Calu3 (cell line): ENCODE measurements at regions of chr2 and their contacts with region 1.

Region 1: DNA sequence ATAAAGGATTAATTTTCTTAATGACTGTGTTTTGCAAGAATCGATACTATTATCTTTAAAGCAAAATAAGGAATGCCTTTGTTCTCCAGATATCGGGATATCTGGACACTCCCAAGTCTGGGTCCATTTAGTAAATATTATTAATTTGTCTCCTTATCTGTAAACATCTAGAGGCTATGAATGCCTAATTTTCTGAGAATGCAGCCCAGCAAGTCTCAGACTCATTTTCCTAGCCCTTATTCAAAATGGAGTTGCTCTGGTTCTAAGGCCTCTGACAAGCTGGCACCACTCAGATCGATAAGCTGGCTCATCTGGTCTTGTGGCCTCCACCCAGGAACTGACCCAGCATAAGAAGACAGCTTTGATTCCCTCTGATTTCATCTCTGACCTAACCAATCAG is 538.8 kb upstream of the SLC8A1 start:
- DNase-seq: peak; percentile 18
- H3K4me3 Mint-ChIP-seq: no peak overlapping the region
- H3K27ac Mint-ChIP-seq: no peak overlapping the region
- H3K4me1 Mint-ChIP-seq: peaks cover 31% of the 10 kb centered on the region
- H3K27me3 Mint-ChIP-seq: no peaks in the 10 kb centered on the region
- CTCF ChIP-seq: no peak

Region 2: DNA sequence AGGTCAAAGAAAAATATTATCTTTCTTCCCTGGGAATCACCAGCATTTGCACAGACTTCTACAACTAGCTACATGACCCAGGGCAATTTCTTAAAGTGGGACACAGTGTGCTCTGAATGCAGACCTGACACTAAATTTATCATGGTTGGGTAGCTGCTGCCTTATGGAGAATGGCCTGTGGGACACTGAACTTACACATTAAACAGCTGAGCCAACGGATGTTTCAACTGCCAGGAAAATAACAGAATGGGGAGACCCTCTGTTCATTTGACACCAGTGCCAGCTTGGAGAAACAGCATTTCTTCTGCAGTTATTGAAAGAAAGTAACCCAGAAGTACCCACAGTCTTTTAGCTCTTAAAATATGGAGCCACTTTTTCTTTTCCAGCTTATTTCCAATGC is 592.9 kb before region 1 on chr2:
- CTCF ChIA-PET with region 1: interaction called, 13 read pairs
- intact Hi-C with region 1: no loop called
- DNase-seq: no peak
- H3K4me3 Mint-ChIP-seq: no peak overlapping the region
- H3K27ac Mint-ChIP-seq: no peak overlapping the region
- H3K4me1 Mint-ChIP-seq: peaks cover 45% of the 10 kb centered on the region
- H3K27me3 Mint-ChIP-seq: no peaks in the 10 kb centered on the region
- CTCF ChIP-seq: no peak

Region 3: GRCh38 chr2:40935349-40935748 is 55.3 kb before region 1 on chr2:
- CTCF ChIA-PET with region 1: no interaction called
- intact Hi-C with region 1: no loop called
- DNase-seq: no peak
- H3K4me3 Mint-ChIP-seq: no peak overlapping the region
- H3K27ac Mint-ChIP-seq: no peak overlapping the region
- H3K4me1 Mint-ChIP-seq: no peaks in the 10 kb centered on the region
- H3K27me3 Mint-ChIP-seq: no peaks in the 10 kb centered on the region
- CTCF ChIP-seq: no peak

Region 4: GRCh38 chr2:41207578-41207977 is 216.9 kb after region 1 on chr2:
- CTCF ChIA-PET with region 1: no interaction called
- intact Hi-C with region 1: loop called (anchors 1 kb)
- DNase-seq: peak; percentile 60
- H3K4me3 Mint-ChIP-seq: no peak overlapping the region
- H3K27ac Mint-ChIP-seq: peak overlapping the region; percentile 10
- H3K4me1 Mint-ChIP-seq: peaks cover 47% of the 10 kb centered on the region
- H3K27me3 Mint-ChIP-seq: no peaks in the 10 kb centered on the region
- CTCF ChIP-seq: no peak